ENCODE measurements at regions of chr14 and their contacts with region 1.

Region 1: GRCh38 chr14:91228112-91229004 is 16.1 kb downstream of the GPR68 start:
- DNase-seq: peak; percentile 76
- H3K4me3 Mint-ChIP-seq: peak overlapping the region; percentile 75
- H3K27ac Mint-ChIP-seq: peak overlapping the region; percentile 100
- H3K4me1 Mint-ChIP-seq: peaks cover 80% of the 10 kb centered on the region
- H3K27me3 Mint-ChIP-seq: no peaks in the 10 kb centered on the region

Region 2: DNA sequence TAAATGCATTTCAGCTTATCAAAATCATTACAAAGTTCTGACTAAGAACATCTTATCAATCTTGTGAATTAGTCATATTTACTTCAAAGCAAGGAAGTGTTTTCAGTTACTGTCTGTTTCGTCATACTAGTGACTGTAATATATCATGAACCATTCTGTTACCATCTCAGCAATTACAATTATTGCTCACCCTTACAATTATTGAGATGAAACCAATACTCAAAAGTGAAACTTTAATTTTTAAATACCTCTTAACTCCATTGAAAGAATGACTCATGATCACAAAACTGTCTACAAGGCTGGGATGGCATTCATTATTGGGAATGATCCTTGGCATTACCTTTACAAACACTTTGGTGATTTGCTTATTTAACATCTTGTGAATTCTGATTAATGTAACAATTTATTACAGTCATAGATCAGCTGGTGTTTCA is 258.2 kb before region 1 on chr14:
- intact Hi-C with region 1: loop called (anchors 1 kb)
- DNase-seq: no peak
- H3K4me3 Mint-ChIP-seq: peak overlapping the region; percentile 66
- H3K27ac Mint-ChIP-seq: peak overlapping the region; percentile 93
- H3K4me1 Mint-ChIP-seq: peaks cover 45% of the 10 kb centered on the region
- H3K27me3 Mint-ChIP-seq: no peaks in the 10 kb centered on the region

Region 3: GRCh38 chr14:91193069-91193468 is 35.3 kb before region 1 on chr14:
- intact Hi-C with region 1: loop called (anchors 1 kb)
- DNase-seq: no peak
- H3K4me3 Mint-ChIP-seq: no peak overlapping the region
- H3K27ac Mint-ChIP-seq: no peak overlapping the region
- H3K4me1 Mint-ChIP-seq: peaks cover 37% of the 10 kb centered on the region
- H3K27me3 Mint-ChIP-seq: no peaks in the 10 kb centered on the region

Region 4: DNA sequence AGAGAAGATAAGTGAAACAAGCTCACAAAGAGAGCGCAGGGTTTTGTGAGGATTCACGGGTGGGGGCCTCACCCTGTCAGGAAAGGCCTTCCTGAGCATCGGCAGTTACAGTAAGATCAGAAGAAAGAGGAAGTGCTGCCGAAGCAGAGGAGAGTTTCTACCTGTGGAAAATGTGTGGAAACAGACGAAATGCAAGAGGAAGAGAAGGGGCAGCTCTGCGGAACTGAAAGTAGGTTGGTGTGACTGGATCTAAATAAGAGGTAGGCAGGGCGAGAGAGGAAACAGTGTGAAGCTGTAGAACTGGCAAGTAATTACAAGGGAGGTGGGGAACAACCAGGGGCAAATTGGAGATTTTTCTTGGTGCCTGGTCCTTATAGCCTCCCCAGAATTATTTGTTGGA is 13.5 kb after region 1 on chr14:
- intact Hi-C with region 1: loop called (anchors 1 kb)
- DNase-seq: peak; percentile 40
- H3K4me3 Mint-ChIP-seq: peak overlapping the region; percentile 84
- H3K27ac Mint-ChIP-seq: peak overlapping the region; percentile 84
- H3K4me1 Mint-ChIP-seq: peaks cover 79% of the 10 kb centered on the region
- H3K27me3 Mint-ChIP-seq: no peaks in the 10 kb centered on the region

Region 5: DNA sequence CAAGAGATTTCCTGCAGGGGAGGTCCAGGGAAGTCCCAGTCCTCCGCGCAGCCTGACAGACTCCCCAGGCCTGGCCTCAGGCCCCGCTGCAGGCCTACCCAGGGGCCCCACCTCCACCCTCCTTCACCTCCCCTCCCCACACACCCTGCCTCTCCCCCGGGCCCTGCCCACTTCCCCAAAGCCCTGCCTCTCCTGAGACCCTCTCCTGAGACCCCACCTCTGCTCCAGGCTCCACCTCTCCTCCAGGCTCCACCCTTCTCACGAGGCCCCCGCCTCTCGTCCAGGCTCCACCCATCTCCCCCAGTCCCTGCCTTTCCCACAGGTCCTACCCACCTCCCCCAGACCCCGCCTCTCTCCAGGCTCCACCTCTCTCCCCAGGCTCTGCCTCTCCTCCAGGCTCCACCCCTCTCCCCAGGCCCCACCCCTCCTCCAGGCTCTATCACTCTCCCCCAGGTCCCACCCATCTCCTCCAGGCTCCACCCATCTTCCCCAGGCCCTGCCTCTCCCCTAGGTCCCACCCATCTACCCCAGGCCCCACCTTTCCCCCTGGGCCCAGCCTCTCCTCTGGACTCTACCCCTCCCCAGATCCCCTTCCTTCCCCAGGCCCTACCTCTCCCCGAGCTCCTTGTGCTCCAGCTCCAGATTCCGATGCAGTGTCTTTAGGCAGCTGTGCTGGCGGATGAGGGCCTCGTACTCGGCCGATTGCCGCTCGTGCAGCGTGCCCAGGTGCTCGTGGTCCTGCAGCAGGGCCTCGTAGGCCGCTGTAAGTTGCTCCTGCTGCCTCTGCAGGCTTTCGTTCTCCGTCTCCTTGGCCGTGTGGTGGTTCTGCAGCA is 74.9 kb after region 1 on chr14:
- intact Hi-C with region 1: loop called (anchors 1 kb)
- DNase-seq: peak; percentile 56
- H3K4me3 Mint-ChIP-seq: peak overlapping the region; percentile 27
- H3K27ac Mint-ChIP-seq: peak overlapping the region; percentile 97
- H3K4me1 Mint-ChIP-seq: peaks cover 46% of the 10 kb centered on the region
- H3K27me3 Mint-ChIP-seq: no peaks in the 10 kb centered on the region

Measured in activated T-helper 2 cell treated with anti-CD3 and anti-CD28 coated beads, Interferon-gamma antibody, Interleukin-2, Interleukin-4, amounts not matched to agents 10 μg/mL and 5 μg/mL and 100 μg/mL, durations not matched to agents 14 hours and 24 hours and 36 hours (primary cell).